Activated naive CD4-positive, alpha-beta T cell treated with anti-CD3 and anti-CD28 coated beads for 36 hours (primary cell): ENCODE measurements at regions of chr17 and their contacts with region 1.

Region 1: DNA sequence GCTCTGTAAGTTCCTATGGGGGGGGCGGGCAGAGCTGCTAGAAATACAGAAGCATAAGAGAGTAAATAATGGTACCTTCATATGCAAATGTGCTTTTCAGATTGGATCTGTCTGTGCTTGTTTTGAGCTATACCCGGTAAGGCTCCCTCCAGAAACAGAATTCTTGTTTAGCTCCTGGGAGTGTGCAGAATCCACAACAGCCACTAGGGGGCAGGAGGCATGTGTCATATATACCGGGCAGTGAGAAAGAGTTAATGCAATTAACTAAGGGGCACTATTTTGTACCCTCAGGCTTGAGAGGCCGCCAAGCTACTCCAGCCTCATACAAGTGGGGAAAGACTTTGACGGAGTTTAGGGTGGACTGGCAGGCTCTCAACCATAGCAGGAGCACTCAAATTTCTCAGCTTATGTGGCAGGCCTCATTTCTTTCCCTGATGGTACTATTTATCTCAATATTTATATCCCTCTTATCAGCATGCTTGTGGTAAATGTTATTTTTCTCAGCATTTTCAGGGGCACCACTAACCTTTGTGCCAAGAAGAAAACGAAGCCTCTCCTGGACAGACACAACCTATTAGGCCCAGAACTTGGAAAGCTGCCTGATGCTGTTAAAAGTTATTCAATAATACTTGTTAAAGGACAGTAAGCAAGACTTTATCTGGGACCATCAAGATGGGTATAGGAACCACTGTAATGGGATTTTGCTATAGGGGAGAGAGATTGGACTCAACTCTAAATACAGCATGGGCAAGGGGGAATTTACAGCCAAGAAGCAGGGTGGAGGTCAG is 10.7 kb upstream of the CENPV start:
- DNase-seq: peak; percentile 91
- H3K4me3 Mint-ChIP-seq: no peak overlapping the region
- H3K27ac Mint-ChIP-seq: no peak overlapping the region
- H3K4me1 Mint-ChIP-seq: no peaks in the 10 kb centered on the region
- H3K27me3 Mint-ChIP-seq: no peaks in the 10 kb centered on the region

Region 2: GRCh38 chr17:16150251-16150856 is 213.6 kb before region 1 on chr17:
- CTCF ChIA-PET with region 1: no interaction called
- intact Hi-C with region 1: no loop called
- DNase-seq: no peak
- H3K4me3 Mint-ChIP-seq: no peak overlapping the region
- H3K27ac Mint-ChIP-seq: no peak overlapping the region
- H3K4me1 Mint-ChIP-seq: no peaks in the 10 kb centered on the region
- H3K27me3 Mint-ChIP-seq: no peaks in the 10 kb centered on the region

Region 3: DNA sequence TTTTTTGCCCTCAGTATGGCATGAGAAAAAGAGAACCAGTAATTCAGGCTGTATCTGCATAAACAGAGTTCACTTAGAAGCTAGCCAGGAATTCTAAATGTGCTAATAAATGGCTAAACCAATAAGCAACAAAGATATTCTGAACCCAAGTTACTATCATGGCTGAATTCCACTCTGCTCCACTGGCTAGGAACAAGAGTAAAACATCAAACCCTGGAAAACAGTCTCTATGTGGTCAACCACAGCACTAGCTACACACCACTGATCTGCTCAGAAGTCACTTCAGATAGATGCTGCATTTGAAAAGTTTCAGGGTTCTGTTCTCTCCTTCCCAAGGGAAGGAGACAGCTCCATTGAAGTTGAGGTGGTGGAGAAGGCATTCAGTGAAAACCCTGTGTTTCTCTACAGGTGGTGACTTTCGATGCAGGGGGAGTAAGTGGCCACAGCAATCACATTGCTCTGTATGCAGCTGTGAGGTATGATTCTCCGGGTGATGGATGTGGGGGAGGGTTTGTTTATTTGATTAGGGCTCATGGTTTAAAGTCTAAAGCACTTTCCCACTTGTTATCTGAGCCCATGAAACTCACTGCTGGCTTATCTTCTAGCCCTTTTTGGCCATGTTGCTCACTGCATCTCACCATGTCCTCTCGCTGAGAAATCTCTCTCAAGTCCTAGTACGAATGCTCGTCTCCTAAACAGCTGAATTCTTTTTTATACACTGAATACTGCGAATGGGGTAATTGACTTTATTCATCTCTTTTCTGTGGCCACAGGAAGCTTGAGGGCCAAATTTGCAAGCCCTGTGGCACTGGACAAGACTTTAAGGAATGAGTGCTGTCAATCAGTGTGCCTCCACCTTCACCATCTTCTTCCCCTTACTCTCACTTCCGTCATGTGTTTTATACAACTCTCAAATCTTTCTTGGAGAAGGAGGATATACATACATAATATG is 50.5 kb before region 1 on chr17:
- CTCF ChIA-PET with region 1: no interaction called
- intact Hi-C with region 1: no loop called
- DNase-seq: no peak
- H3K4me3 Mint-ChIP-seq: no peak overlapping the region
- H3K27ac Mint-ChIP-seq: no peak overlapping the region
- H3K4me1 Mint-ChIP-seq: peaks cover 8% of the 10 kb centered on the region
- H3K27me3 Mint-ChIP-seq: no peaks in the 10 kb centered on the region

Region 4: GRCh38 chr17:16353317-16354174 is 10.4 kb before region 1 on chr17 and contains the start of gene CENPV:
- CTCF ChIA-PET with region 1: interaction called, 15 read pairs
- intact Hi-C with region 1: no loop called
- DNase-seq: peak; percentile 62
- H3K4me3 Mint-ChIP-seq: peak within 1 kb of the TSS; percentile 96
- H3K27ac Mint-ChIP-seq: peak within 1 kb of the TSS; percentile 77
- H3K4me1 Mint-ChIP-seq: peaks cover 22% of the 10 kb centered on the region
- H3K27me3 Mint-ChIP-seq: no peaks in the 10 kb centered on the region
- total RNA-seq, gene CENPV: 117 to 121 TPM

Region 5: DNA sequence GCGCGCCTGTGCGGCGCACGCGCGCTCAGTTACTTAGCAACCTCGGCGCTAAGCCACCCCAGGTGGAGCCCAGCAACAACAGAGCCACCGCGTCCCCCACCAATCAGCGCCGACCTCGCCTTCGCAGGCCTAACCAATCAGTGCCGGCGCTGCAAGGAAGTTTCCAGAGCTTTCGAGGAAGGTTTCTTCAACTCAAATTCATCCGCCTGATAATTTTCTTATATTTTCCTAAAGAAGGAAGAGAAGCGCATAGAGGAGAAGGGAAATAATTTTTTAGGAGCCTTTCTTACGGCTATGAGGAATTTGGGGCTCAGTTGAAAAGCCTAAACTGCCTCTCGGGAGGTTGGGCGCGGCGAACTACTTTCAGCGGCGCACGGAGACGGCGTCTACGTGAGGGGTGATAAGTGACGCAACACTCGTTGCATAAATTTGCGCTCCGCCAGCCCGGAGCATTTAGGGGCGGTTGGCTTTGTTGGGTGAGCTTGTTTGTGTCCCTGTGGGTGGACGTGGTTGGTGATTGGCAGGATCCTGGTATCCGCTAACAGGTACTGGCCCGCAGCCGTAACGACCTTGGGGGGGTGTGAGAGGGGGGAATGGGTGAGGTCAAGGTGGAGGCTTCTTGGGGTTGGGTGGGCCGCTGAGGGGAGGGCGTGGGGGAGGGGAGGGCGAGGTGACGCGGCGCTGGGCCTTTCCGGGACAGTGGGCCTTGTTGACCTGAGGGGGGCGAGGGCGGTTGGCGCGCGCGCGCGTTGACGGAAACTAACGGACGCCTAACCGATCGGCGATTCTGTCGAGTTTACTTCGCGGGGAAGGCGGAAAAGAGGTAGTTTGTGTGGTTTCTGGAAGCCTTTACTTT is 16.9 kb after region 1 on chr17 and contains the start of gene UBB:
- CTCF ChIA-PET with region 1: interaction called, 10 read pairs
- intact Hi-C with region 1: no loop called
- DNase-seq: peak; percentile 96
- H3K4me3 Mint-ChIP-seq: peak within 1 kb of the TSS; percentile 90
- H3K27ac Mint-ChIP-seq: peak within 1 kb of the TSS; percentile 96
- H3K4me1 Mint-ChIP-seq: peaks cover 35% of the 10 kb centered on the region
- H3K27me3 Mint-ChIP-seq: no peaks in the 10 kb centered on the region
- total RNA-seq, gene UBB: 1,579 to 1,628 TPM

Region 6: GRCh38 chr17:16453493-16453851 is 89.5 kb after region 1 on chr17:
- CTCF ChIA-PET with region 1: interaction called, 14 read pairs
- intact Hi-C with region 1: no loop called
- DNase-seq: no peak
- H3K4me3 Mint-ChIP-seq: no peak overlapping the region
- H3K27ac Mint-ChIP-seq: no peak overlapping the region
- H3K4me1 Mint-ChIP-seq: peaks cover 11% of the 10 kb centered on the region
- H3K27me3 Mint-ChIP-seq: no peaks in the 10 kb centered on the region

Region 7: GRCh38 chr17:16521070-16521727 is 157.3 kb after region 1 on chr17:
- CTCF ChIA-PET with region 1: interaction called, 71 read pairs
- intact Hi-C with region 1: loop called (anchors 1 kb)
- DNase-seq: peak; percentile 82
- H3K4me3 Mint-ChIP-seq: no peak overlapping the region
- H3K27ac Mint-ChIP-seq: no peak overlapping the region
- H3K4me1 Mint-ChIP-seq: no peaks in the 10 kb centered on the region
- H3K27me3 Mint-ChIP-seq: peaks cover 26% of the 10 kb centered on the region